ENCODE measurements at regions of chr19 and their contacts with region 1.

Region 1: DNA sequence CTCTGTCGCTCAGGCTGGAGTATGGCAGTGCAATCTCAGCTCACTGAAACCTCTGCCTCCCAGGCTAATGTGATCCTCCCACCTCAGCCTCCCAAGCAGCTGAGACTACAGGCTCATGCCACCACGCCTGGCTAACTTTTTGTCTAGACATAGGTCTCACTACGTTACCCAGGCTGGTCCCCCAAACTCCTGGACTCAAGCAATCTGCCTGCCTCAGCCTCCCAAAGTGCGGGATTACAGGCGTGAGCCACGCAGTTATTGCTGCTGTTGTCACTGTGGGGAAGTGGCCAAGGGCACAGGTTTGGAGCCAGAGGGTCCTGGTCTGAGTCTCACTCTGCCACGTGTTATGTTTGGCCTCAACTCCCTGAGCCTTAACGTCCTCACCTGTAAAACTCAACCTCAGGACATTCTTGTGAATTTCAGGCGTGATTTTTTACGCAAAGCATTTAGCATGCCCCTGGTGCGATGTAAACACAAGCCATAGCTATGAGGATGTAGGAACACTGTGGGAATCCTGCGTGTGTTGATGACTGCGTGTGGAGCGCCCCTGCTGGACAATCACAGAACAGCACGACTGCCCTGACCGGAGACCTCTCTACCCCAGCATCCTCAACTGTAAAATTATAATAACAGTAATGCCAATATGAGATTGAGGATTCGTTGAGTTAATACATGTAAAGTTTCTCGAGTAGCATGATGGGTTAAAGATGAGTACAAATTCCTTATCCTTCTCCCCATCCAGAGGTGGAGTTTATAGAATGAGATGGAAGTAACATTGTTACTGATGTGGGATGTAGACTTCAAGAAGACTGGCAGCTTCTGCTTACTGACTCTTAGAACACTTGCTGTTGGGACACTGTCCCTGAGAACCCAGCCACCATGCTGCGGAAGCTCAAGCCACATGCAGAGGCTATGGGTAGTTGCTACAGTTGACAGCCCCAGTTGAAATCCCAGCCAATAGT is 41.8 kb upstream of the PNMA8B start:
- DNase-seq: peak; percentile 58
- CTCF ChIP-seq: peak; percentile 79

Region 2: GRCh38 chr19:46551164-46551563 is 13.7 kb after region 1 on chr19:
- CTCF ChIA-PET with region 1: interaction called, 21 read pairs
- POLR2A ChIA-PET with region 1: no interaction called
- DNase-seq: no peak
- CTCF ChIP-seq: no peak

Measured in GM10248 (cell line).